PC-3 (cell line): ENCODE measurements at regions of chr2 and their contacts with region 1.

Region 1: GRCh38 chr2:58762176-58762781 is 521.2 kb upstream of the FANCL start:
- DNase-seq: peak; percentile 86
- ATAC-seq: peak; percentile 96
- H3K4me3 ChIP-seq: no peak overlapping the region
- H3K27ac ChIP-seq: no peak overlapping the region
- H3K4me1 ChIP-seq: 0 out of 2 replicates have a peak, but pooled peaks cover 3% of the 10 kb centered on the region
- H3K27me3 ChIP-seq: peaks cover 53% of the 10 kb centered on the region
- CTCF ChIP-seq: peak; percentile 89

Region 2: DNA sequence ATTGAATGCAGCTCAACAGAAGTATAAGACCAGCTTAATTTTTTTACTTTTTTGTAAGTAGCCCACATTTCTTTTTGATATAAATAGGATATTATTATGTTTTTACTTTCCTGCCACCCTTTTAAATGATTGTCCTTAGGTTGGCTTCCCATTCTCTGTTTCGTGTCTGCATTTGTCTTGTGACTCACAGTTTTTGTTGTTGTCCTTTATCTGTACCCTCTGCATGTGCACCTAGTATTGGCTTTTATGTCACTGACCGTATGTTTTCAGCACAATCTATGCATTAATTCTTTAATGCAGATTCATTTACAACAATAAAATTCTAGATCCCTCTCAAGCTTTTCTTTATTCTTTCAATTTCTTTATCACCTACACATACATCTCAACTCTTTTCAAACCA is 46.9 kb before region 1 on chr2:
- CTCF ChIA-PET with region 1: no interaction called
- POLR2A ChIA-PET with region 1: no interaction called
- intact Hi-C with region 1: loop called (anchors 5 kb)
- DNase-seq: no peak
- ATAC-seq: no peak
- H3K4me3 ChIP-seq: no peak overlapping the region
- H3K27ac ChIP-seq: no peak overlapping the region
- H3K4me1 ChIP-seq: no peaks in the 10 kb centered on the region
- H3K27me3 ChIP-seq: peaks cover 79% of the 10 kb centered on the region
- CTCF ChIP-seq: no peak

Region 3: DNA sequence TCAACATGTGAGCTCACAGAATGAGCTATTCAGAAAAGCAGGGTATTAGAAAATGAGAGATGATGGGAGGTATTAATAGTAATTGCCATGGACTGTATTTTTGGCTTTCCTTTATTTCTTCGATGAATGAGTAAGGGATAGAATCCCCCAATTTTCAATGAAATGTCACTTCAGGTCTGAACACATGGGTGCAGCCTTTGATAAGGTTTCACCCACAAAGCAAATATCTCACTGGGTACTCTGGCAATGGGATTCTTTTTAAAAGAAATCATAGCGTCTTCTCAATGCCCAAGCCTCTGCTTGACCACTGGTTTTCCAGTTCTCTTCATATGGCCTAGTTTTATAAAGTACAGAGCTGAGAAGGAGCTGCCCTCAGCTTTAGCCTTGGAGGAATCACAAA is 89.3 kb after region 1 on chr2:
- CTCF ChIA-PET with region 1: no interaction called
- POLR2A ChIA-PET with region 1: no interaction called
- intact Hi-C with region 1: no loop called
- DNase-seq: no peak
- ATAC-seq: no peak
- H3K4me3 ChIP-seq: no peak overlapping the region
- H3K27ac ChIP-seq: no peak overlapping the region
- H3K4me1 ChIP-seq: no peaks in the 10 kb centered on the region
- H3K27me3 ChIP-seq: peaks cover 81% of the 10 kb centered on the region
- CTCF ChIP-seq: no peak

Region 4: GRCh38 chr2:58871469-58872142 is 109.3 kb after region 1 on chr2:
- CTCF ChIA-PET with region 1: no interaction called
- POLR2A ChIA-PET with region 1: no interaction called
- intact Hi-C with region 1: loop called (anchors 10 kb)
- DNase-seq: peak; percentile 25
- ATAC-seq: no peak
- H3K4me3 ChIP-seq: no peak overlapping the region
- H3K27ac ChIP-seq: no peak overlapping the region
- H3K4me1 ChIP-seq: no peaks in the 10 kb centered on the region
- H3K27me3 ChIP-seq: peaks cover 29% of the 10 kb centered on the region; the same call in 1 of the 2 replicates
- CTCF ChIP-seq: peak; percentile 62

Region 5: GRCh38 chr2:59182249-59182648 is 420.0 kb after region 1 on chr2:
- CTCF ChIA-PET with region 1: no interaction called
- POLR2A ChIA-PET with region 1: no interaction called
- intact Hi-C with region 1: loop called (anchors 10 kb)
- DNase-seq: peak; percentile 35
- ATAC-seq: 0 out of 2 replicates have a peak, but pooled peaks have one; percentile 20
- H3K4me3 ChIP-seq: no peak overlapping the region
- H3K27ac ChIP-seq: no peak overlapping the region
- H3K4me1 ChIP-seq: no peaks in the 10 kb centered on the region
- H3K27me3 ChIP-seq: peaks cover 4% of the 10 kb centered on the region; the same call in 1 of the 2 replicates
- CTCF ChIP-seq: peak; percentile 58